ENCODE measurements at regions of chr6 and their contacts with region 1.

Region 1: DNA sequence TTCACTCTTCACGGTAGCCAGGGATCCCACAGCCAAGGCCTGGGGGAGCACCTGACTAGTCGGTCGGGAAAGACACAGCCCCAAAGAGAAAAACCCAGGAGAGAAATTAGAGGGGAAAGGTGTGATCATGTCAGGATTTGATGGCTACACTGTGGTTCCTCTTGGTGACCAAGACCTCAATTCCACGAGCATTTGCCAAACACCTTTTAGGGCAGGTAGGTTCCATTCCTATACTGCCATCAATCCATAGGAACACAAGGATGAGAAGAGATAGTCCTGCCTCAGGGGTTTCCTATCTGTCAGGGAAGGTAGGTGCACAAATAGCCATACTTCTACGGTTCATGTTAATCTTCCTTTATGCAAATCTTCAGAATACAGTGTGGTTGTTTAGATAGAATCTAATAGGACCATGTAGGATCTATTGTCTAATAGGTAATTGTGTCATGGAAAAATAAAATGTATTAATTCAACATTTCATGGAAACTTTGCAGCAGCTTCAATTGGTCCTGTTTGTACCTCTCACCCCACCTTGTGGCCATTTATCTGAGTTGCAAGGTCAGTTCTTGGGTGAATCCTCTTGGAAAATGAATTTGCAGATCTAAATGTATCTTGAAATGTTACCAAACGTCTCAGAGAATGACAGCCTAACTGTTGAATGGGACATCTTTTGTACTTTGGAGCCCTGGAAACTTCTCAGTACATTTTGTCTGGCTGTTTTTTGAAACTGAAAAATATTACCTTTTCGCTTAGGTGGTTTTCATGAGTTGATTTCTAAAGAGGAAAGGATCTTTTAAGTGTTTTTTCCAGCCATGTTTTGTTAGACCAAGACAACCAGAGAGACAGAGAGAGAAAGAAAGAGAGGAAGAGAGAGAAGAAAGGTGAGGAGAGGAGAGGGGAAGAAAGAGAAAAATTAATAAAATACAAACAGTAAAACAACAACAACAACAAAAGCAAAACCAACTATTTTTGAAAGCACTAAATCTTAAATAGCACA is 33.7 kb upstream of the IYD start:
- DNase-seq: no peak
- ATAC-seq: peak in 2 of 4 donors; percentile 53 to 78
- H3K4me3 ChIP-seq: no peak overlapping the region
- H3K27ac ChIP-seq: no peak overlapping the region
- H3K4me1 ChIP-seq: no peaks in the 10 kb centered on the region
- H3K27me3 ChIP-seq: no peaks in the 10 kb centered on the region
- CTCF ChIP-seq: peak; percentile 95

Region 2: GRCh38 chr6:150072201-150072600 is 262.9 kb before region 1 on chr6:
- intact Hi-C with region 1: no loop called
- DNase-seq: peak; percentile 79 to 84
- ATAC-seq: peak; percentile 50 to 77 (median 68)
- H3K4me3 ChIP-seq: no peak overlapping the region
- H3K27ac ChIP-seq: no peak overlapping the region
- H3K4me1 ChIP-seq: peaks cover 6% of the 10 kb centered on the region
- H3K27me3 ChIP-seq: no peaks in the 10 kb centered on the region
- CTCF ChIP-seq: no peak

Region 3: GRCh38 chr6:150142670-150143515 is 192.2 kb before region 1 on chr6 and contains the start of gene PPP1R14C:
- intact Hi-C with region 1: loop called in 1 of 2 experiments (anchors 5 kb)
- DNase-seq: peak; percentile 43 to 75
- ATAC-seq: peak; percentile 79 to 84 (median 80)
- H3K4me3 ChIP-seq: peak within 1 kb of the TSS; percentile 81
- H3K27ac ChIP-seq: peak within 1 kb of the TSS; percentile 88
- H3K4me1 ChIP-seq: peaks cover 11% of the 10 kb centered on the region
- H3K27me3 ChIP-seq: peaks cover 0 to 5% (median 0%) of the 10 kb centered on the region in 3 donors
- CTCF ChIP-seq: no peak
- total RNA-seq, gene PPP1R14C: 13.3 to 62.8 (median 22.4) TPM

Measured in psoas muscle (tissue), 8 donors.